ENCODE measurements at regions of chr10 and their contacts with region 1.

Region 1: DNA sequence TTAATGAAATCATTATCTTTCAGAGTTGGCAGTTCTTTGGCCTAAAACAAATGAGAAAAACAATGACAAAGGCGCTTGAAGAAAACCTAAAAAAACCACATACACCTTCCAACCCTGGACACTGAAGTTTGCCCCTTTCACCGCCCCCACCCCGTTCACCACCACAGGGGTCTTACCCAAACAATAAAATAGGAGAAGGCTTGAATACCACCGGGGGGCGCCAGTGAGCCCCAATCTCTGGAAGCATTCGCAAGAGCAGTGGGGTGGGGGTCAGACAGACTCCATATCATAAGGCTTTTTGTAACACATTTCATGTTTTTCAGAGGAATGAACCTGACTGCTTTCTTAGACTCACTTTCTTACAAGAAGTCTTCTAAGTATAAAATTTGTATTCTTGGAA is 163.6 kb downstream of the PIP4K2A start:
- DNase-seq: peak; percentile 47

Region 2: GRCh38 chr10:22158426-22158825 is 392.3 kb before region 1 on chr10:
- in situ Hi-C with region 1: no loop called
- DNase-seq: no peak

Region 3: DNA sequence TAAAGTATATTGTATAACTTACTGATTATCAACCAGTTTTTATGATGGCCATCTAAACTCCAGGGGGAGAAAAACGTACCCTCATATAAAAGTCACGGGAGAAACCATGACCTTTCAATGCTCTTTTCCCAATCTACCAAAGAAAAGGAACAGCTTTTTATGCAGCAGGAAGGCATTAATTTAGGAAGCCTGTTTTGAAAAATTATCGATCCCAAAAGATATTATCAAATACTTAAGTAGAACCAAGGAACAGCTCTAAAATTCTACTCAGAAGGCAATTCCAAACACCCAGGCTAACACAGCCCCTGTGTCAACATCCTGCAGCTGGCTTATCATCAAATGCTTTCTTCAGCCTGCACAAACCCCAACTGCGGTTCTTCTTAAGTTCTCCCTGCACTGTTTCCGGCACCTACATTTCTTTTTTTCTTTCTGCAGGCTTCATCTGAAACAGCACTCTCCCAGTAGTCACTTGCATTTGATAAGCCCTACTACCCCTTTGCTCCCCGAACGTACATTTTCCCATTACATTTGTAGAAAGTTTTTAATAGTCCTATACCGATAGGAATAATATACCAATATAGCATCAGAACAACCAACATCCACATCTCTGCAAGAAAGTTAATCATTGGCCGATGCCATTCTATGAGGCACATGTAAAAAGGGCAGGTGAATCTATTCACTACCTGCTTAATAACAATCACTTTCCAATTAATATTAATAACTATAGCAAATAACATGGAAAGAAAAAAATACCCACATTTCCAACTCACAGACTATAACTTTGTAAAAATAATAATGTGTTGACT is 115.8 kb after region 1 on chr10:
- in situ Hi-C with region 1: no loop called
- DNase-seq: peak; percentile 44

Region 4: DNA sequence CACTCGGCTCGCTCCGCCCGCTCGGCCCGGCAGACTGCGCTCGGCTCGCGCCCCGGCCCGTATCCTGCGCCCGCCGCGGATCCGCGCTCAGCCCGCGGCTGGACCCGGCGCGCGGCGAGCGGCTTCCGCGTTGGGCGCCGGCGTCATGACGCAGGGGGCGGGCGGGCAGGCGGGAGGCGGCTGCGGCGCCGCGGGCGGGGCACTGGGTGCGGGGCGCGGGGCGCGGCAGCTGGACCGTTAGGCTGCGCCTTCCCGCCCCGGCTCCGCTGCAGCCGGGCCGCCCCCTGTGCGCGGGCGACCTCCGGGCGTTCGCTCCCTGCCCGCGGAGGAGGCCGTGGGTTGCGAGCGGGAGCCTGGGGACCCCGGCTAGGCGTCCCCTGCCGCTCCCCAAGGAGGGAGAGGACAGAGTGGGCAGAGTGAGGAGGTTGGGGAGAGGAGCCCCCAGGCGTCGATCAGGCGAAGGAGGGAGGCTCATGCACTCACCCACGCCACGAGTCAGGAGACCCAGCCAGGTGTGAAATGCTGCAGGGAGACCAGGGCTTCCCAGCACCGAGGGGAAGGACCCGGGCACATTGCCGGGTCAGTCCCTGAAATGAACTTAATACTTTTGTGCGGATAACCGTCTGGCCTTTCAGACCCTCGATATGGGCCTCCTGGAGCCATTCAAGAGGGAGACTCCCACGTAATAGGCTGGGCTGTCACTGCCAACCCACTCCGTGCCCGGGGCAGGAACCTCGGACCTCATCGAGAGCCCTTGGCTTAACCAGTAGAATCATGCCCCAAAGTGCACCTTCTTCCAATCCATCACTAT is 164.0 kb after region 1 on chr10 and contains the start of gene PIP4K2A:
- in situ Hi-C with region 1: no loop called
- DNase-seq: peak; percentile 60
- total RNA-seq, gene PIP4K2A: 104 and 109 TPM in 2 replicates

Region 5: DNA sequence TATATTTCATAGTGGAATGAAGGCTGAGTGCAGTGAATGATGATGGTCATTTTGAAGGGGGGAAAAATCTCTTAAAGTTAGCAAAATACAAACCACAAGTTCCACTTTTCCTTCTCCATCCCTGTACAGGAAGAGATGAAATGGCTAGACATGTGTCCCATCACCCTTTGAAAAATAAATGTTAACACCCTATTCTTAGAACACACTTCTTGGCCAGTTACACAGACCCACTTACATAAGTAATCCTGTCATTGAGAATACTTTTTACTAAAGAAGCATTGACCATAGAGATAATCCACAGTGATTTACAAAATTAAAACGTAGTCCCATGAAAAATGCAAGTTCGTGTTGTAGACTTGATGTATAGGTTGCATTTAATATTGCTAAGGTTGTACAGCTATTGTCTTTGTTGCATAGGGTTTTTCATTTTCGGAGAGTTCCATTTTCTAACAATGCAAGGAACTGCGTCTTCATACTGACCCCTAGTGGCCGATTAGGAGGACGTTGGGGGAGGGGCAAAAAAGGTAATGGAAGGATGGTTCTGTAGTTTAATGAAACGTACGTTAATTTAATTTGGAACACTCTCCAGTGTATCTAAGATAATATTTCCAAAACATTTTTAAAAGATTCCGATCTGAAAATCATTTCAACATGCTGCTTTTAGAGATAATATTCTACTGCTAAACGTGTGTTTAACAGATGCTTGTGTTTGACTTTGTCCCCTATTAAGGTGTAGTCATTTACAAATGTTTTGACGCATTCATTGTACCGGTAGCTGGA is 438.0 kb after region 1 on chr10:
- in situ Hi-C with region 1: loop called (anchors 25 kb)
- DNase-seq: peak; percentile 68